Esophagus squamous epithelium (tissue), 5 donors: ENCODE measurements at regions of chr17 and their contacts with region 1.

Region 1: GRCh38 chr17:6666077-6666521 is 14.5 kb downstream of the C17orf100 start:
- DNase-seq: no peak
- H3K4me3 ChIP-seq: peak overlapping the region in 1 of 4 donors; percentile 1
- H3K27ac ChIP-seq: peak overlapping the region; percentile 71 to 85 (median 79)
- H3K4me1 ChIP-seq: peaks cover 11 to 54% (median 13%) of the 10 kb centered on the region in 3 donors
- H3K27me3 ChIP-seq: peaks cover 0 to 4% (median 0%) of the 10 kb centered on the region in 4 donors
- CTCF ChIP-seq: peak; percentile 79 to 96 (median 84)
- POLR2A ChIP-seq: no peak

Region 2: GRCh38 chr17:6639014-6639585 is 27.0 kb before region 1 on chr17:
- intact Hi-C with region 1: no loop called
- DNase-seq: no peak
- H3K4me3 ChIP-seq: peak overlapping the region; percentile 67 to 94 (median 88)
- H3K27ac ChIP-seq: peak overlapping the region; percentile 91 to 94 (median 93)
- H3K4me1 ChIP-seq: peaks cover 19 to 58% (median 34%) of the 10 kb centered on the region in 3 donors
- H3K27me3 ChIP-seq: no peaks in the 10 kb centered on the region
- CTCF ChIP-seq: no peak
- POLR2A ChIP-seq: peak in 1 of 4 donors; percentile 28

Region 3: DNA sequence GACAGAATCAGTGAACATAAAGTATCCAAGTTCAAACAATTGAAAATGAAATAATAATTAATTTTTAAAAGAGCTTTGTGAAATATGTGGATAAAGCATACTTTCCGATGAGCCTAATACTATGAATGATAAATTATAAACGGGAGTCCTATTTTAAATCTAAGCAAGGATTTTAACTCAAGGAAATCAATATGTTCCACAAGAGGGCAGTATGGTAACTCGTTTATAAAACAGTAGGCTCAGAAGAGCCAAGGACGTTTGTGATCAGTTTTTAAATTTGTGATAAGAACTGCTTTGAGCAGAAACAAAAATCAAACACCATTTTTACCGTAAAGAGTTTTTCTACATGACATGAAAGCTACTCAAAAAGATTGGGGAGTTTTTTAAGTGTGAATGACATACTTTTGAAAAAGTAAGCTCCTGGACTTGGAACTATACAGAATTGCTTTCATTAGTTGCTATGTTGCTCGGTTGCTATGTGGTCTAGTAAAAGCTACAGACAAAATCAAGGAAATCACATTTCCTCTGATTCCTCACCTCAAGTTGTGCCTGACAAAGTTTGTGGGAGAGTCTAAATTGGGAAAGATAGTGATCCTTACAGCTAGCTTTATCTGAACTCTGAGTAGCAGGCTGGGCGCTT is 177.3 kb after region 1 on chr17:
- intact Hi-C with region 1: loop called (anchors 10 kb)
- DNase-seq: no peak
- H3K4me3 ChIP-seq: no peak overlapping the region
- H3K27ac ChIP-seq: no peak overlapping the region
- H3K4me1 ChIP-seq: peaks cover 0 to 8% (median 0%) of the 10 kb centered on the region in 3 donors
- H3K27me3 ChIP-seq: peaks cover 0 to 49% (median 2%) of the 10 kb centered on the region in 4 donors
- CTCF ChIP-seq: peak; percentile 24 to 76 (median 59)
- POLR2A ChIP-seq: no peak

Region 4: GRCh38 chr17:7004398-7005253 is 338.5 kb after region 1 on chr17:
- intact Hi-C with region 1: loop called (anchors 10 kb)
- DNase-seq: no peak
- H3K4me3 ChIP-seq: no peak overlapping the region
- H3K27ac ChIP-seq: peak overlapping the region in 1 of 4 donors; percentile 9
- H3K4me1 ChIP-seq: peaks cover 0 to 32% (median 0%) of the 10 kb centered on the region in 3 donors
- H3K27me3 ChIP-seq: no peaks in the 10 kb centered on the region
- CTCF ChIP-seq: peak; percentile 30 to 78 (median 64)
- POLR2A ChIP-seq: no peak